ENCODE measurements at regions of chr4 and their contacts with region 1.

Region 1: GRCh38 chr4:1746265-1746691 is 25.0 kb downstream of the TACC3 start:
- DNase-seq: peak; percentile 57 to 96
- H3K4me3 ChIP-seq: no peak overlapping the region
- H3K4me1 ChIP-seq: no peaks in the 10 kb centered on the region
- H3K27me3 ChIP-seq: no peaks in the 10 kb centered on the region

Region 2: DNA sequence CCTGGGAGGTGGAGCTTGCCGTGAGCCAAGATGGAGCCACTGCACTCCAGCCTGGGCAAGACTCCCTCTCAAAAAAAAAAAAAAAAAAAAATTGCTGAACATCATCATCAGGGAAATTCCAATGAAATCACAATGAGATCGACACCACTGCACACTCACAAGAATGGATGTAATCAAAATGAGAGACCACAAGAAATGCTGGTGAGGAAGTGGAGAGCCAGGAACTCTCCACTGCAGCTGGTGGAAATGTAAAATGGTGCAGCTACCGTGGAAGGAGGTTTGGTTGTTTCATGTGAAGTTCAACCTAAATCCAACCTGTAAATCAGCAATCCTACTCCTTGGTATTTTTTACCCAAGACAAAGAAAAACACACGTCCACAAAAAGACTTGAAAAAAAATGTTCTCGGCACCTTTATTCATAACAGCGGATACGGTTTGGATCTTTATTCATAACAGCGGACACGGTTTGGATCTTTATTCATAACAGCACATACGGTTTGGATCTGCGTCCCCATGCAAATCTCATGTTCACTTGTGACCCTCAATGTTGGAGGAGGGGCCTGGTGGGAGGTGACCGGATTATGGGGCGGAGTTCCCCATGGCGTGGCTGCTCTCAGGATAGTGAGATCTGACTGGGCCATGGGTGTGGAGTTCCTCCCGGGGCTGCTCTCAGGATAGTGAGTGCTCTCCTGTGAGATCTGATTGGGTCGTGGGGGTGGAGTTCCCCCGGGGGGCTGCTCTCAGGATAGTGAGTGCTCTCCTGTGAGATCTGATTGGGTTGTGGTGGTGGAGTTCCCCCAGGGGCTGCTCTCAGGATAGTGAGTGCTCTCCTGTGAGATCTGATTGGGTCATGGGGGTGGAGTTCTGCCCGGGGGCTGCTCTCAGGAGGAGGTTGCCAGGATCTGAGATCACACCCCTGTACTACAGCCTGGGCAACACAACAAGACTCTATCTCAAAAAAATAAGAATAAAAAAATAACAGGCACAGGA is 821.9 kb before region 1 on chr4:
- in situ Hi-C with region 1: no loop called
- DNase-seq: no peak
- H3K4me3 ChIP-seq: no peak overlapping the region
- H3K4me1 ChIP-seq: no peaks in the 10 kb centered on the region
- H3K27me3 ChIP-seq: no peaks in the 10 kb centered on the region

Region 3: GRCh38 chr4:1899149-1900086 is 153.1 kb after region 1 on chr4:
- in situ Hi-C with region 1: loop called (anchors 10 kb)
- DNase-seq: peak; percentile 67 to 84
- H3K4me3 ChIP-seq: no peak overlapping the region
- H3K4me1 ChIP-seq: no peaks in the 10 kb centered on the region; the same call in 1 of the 2 replicates
- H3K27me3 ChIP-seq: no peaks in the 10 kb centered on the region

Measured in HAP-1 (cell line).